ENCODE measurements at regions of chr16 and their contacts with region 1.

Region 1: DNA sequence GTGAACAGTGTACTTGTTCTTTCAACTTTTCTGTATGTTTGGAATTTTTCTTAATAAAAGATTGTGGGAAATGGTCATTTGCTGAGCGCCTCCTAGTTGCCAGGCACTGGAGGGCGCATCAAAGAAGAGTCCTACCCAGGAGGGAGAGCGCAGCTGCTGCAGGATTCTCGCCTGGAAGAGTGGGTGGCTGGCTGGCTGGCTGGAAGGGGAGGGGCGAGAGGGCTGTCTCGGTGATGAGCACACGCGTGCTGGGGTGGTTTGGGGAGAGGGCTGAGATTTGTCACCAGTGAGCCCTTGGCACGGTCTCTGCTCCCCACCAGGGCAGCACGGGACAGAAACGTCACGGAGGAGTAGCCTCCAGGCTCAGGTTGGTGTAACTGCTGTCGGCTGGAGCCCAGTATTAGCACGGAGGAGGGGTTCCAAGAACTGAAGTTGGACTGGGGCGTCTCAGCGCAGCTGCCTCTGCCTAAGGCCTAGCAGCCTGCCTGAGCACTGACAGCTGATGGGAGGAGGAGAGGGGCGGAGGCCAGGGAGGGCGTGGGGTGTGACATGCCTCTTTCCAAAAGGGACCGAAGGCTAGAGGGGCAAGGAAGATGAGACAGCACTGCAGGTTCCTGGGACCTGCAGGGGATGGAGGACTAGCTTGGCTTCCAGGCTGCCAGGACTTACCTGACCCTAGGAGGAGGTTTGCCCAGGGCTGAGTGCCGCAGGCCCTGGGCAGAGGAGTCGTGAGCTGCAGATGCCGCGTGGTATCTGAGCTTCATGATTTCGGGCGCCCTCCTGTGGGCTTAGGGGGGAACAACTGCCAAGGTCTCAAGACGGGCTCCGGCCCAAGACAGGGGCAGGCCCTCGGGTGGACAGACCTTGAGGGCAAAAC is 5.7 kb downstream of the LDHD start:
- DNase-seq: peak; percentile 92
- H3K4me3 Mint-ChIP-seq: peak overlapping the region; percentile 67
- H3K27ac Mint-ChIP-seq: peak overlapping the region; percentile 76
- H3K4me1 Mint-ChIP-seq: peaks cover 29% of the 10 kb centered on the region
- H3K27me3 Mint-ChIP-seq: no peaks in the 10 kb centered on the region
- CTCF ChIP-seq: peak; percentile 88

Region 2: GRCh38 chr16:74813109-74813641 is 297.7 kb before region 1 on chr16:
- CTCF ChIA-PET with region 1: interaction called, 15 read pairs
- POLR2A ChIA-PET with region 1: no interaction called
- intact Hi-C with region 1: loop called (anchors 2 kb)
- DNase-seq: peak; percentile 73
- H3K4me3 Mint-ChIP-seq: no peak overlapping the region
- H3K27ac Mint-ChIP-seq: no peak overlapping the region
- H3K4me1 Mint-ChIP-seq: peaks cover 15% of the 10 kb centered on the region
- H3K27me3 Mint-ChIP-seq: no peaks in the 10 kb centered on the region
- CTCF ChIP-seq: peak; percentile 90

Region 3: DNA sequence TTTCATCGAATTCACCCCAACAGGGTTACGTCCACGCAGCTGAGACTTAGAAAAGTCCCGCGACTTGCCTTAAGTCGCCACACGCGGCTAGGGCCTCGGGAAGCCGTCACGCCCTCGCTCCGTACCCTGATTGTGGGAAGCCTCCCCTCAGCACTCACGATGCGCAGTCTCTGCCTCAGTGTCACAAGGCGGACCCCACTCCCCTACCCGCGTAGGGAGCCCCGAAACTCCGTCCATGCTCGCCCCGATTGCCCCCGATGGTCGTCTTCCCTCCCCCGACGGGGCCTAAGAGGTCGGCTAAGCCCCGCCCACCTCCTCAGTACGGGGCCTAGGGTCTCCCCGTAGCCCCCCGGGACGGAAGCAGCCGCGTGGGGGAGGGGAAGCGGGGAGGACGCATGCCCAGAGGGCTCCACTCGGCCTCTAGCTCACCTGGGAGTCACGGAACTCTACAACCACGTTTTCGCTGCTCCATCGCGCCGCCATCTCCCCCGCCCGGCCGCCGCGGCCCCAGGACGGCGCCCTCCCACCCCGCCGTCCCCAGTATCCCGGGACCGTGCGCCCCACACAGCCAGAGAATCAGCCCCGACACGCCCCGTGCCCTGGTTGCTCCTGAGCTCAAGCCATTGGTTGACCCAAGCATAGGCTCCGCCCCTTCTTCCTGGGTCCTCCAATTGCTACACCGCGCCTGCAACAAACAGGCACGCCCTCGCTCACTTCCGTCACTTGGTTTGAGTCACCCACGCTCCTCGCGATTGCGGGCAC is 126.2 kb before region 1 on chr16 and contains the start of gene WDR59:
- CTCF ChIA-PET with region 1: interaction called, 13 read pairs
- POLR2A ChIA-PET with region 1: interaction called, 27 read pairs
- intact Hi-C with region 1: no loop called
- DNase-seq: peak; percentile 100
- H3K4me3 Mint-ChIP-seq: peak within 1 kb of the TSS; percentile 82
- H3K27ac Mint-ChIP-seq: peak within 1 kb of the TSS; percentile 89
- H3K4me1 Mint-ChIP-seq: no peaks in the 10 kb centered on the region
- H3K27me3 Mint-ChIP-seq: no peaks in the 10 kb centered on the region
- CTCF ChIP-seq: no peak
- total RNA-seq, gene WDR59: 53.8 and 56.1 TPM in 2 replicates

Region 4: DNA sequence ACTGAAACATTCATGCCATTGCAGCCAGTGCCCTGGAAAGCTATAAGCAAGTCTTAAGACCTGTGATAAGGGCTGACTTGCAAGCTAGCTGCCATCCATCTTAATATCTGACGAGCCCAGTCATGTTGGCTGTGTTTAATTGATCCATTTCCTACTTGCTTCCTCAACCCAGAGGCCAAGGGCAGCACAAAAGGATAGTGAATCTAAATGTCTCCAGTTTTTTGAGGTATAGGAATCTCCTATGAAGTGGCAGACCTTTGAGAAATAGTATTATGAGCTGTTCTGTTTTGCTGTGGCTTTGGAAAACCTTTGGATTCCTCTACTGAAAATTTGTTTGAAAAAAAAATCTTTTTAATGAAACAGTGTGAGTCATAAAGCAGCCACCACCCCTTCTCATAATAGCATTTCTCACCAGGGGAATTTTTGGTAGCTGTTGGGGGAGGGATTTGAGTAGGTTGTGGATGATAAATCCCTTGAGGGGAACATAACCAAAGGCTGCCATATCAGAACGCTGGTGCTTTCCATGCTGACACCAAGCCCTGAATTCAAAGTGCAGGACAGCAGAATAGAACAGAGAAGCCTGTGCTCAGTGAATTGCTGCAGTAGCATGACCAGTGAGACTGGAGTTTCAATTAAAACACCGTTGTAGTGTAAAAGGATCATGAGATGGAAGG is 99.1 kb before region 1 on chr16:
- CTCF ChIA-PET with region 1: interaction called, 51 read pairs
- POLR2A ChIA-PET with region 1: interaction called, 65 read pairs
- intact Hi-C with region 1: no loop called
- DNase-seq: peak; percentile 92
- H3K4me3 Mint-ChIP-seq: peak overlapping the region; percentile 37
- H3K27ac Mint-ChIP-seq: peak overlapping the region; percentile 81
- H3K4me1 Mint-ChIP-seq: peaks cover 17% of the 10 kb centered on the region
- H3K27me3 Mint-ChIP-seq: no peaks in the 10 kb centered on the region
- CTCF ChIP-seq: no peak

Region 5: DNA sequence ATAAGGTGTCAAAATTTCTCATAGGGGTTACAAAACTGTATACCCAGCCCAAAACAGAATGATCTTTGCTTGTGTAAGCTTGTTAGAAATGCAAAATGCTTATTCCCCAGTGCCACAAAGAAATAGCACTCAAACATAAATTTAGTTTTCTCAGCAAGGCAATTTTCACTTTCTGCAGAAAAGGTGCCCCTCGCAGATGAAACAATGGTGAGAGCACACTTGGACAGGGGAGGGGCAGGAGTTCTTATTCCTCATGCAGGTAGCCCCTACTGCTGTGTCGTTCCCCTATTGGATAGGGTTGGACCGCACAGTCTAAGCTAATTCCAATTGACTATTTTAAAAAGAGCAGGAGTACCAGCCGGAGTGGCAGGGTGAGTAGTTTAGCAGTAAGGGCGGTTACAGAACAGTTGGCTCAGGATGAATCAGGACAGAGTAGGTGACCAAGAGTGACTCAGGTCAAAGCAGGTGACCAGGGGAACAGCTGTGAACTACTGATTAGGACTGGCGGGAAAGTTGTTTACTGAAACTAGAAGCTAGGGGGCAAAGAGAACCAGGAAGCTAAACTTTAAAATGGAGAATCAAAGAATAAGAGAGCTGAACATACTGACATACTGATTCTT is 11.2 kb after region 1 on chr16:
- CTCF ChIA-PET with region 1: interaction called, 30 read pairs
- POLR2A ChIA-PET with region 1: interaction called, 6 read pairs
- intact Hi-C with region 1: no loop called
- DNase-seq: no peak
- H3K4me3 Mint-ChIP-seq: no peak overlapping the region
- H3K27ac Mint-ChIP-seq: no peak overlapping the region
- H3K4me1 Mint-ChIP-seq: no peaks in the 10 kb centered on the region
- H3K27me3 Mint-ChIP-seq: no peaks in the 10 kb centered on the region
- CTCF ChIP-seq: no peak

Region 6: GRCh38 chr16:75423723-75424104 is 312.8 kb after region 1 on chr16:
- CTCF ChIA-PET with region 1: no interaction called
- POLR2A ChIA-PET with region 1: no interaction called
- intact Hi-C with region 1: no loop called
- DNase-seq: no peak
- H3K4me3 Mint-ChIP-seq: no peak overlapping the region
- H3K27ac Mint-ChIP-seq: no peak overlapping the region
- H3K4me1 Mint-ChIP-seq: peaks cover 17% of the 10 kb centered on the region
- H3K27me3 Mint-ChIP-seq: no peaks in the 10 kb centered on the region
- CTCF ChIP-seq: no peak